ENCODE measurements at regions of chr1 and their contacts with region 1.

Region 1: DNA sequence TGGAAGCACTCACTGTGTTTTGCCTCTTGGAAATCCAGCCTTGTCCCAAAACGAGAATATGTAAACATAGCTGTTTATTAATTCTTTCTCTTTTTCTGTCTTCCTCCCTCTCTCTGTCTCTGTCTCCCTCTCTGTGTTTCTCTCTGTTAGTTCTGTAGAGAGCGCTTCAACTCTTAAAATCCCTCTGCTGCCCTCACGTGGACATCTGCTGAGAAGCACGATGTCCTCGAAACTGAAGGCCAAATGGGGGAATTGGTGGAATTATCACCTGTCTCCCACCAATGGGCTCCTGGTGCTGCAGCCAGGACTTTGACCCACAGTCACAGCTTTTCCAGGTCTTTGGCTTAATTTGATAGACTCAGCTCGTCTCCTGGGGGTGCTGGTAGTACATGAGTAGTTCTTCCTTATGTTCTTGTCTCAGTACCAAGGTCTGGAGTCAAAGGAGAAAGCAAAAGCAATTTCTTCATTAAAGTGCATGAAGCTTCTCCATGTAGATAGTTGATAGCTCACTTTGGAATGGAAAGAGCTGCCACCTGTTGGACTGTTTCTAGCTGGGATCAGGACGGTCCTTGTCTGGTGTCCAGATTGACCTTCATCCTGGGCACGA is 5.5 kb upstream of the GBP6 start:
- DNase-seq: peak; percentile 27
- ATAC-seq: peak; percentile 94
- H3K4me3 ChIP-seq: no peak overlapping the region
- H3K27ac ChIP-seq: no peak overlapping the region
- H3K4me1 ChIP-seq: peaks cover 5% of the 10 kb centered on the region
- H3K27me3 ChIP-seq: no peaks in the 10 kb centered on the region
- CTCF ChIP-seq: peak; percentile 69 to 84 (median 77); a peak in 5 of 6 replicates
- EP300 ChIP-seq: no peak
- POLR2A ChIP-seq: no peak
- RAD21 ChIP-seq: peak; percentile 97

Region 2: DNA sequence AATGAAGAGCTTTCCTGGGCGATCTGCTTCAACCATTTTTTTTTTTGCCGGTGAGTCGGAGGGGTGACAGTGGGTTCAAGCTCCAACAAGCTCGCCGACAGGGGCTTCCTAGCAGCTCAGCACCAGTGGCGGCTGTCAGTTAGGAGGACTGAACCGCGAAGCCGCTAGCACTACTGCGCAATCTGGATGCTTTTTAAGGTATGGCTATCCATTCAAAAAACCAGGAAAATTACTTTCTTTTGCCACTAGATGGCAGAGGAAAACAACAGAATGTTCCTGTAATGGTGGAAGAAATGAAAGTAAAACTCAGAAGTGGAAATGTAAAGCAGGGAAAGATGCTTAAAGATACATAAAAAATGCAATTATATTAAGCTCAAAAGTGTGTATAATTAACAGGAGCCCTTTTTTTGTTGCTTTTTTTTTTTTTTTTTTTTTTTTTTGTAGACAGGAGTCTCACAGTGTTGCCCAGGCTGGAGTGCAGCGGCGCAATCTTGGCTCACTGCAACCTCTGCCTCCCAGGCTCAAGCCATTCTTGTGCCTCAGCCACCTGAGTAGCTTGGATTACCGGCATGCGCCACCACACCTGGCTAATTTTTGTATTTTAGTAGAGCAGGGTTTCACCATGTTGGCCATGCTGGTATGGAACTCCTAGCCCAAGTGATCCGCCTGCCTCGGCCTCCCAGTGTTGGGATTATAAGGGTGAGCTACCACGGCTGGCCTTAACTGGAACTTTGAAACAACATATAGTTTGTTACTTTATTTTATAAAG is 374.4 kb before region 1 on chr1:
- CTCF ChIA-PET with region 1: interaction called, 14 read pairs
- POLR2A ChIA-PET with region 1: interaction called, 11 read pairs
- RAD21 ChIA-PET with region 1: interaction called, 3 read pairs
- SMC1A ChIA-PET with region 1: interaction called, 12 read pairs
- in situ Hi-C with region 1: no loop called
- intact Hi-C with region 1: no loop called
- DNase-seq: no peak
- ATAC-seq: peak; percentile 54
- H3K4me3 ChIP-seq: no peak overlapping the region
- H3K27ac ChIP-seq: peak overlapping the region; percentile 27; the same call in 1 of the 2 replicates
- H3K4me1 ChIP-seq: peaks cover 7% of the 10 kb centered on the region
- H3K27me3 ChIP-seq: no peaks in the 10 kb centered on the region
- CTCF ChIP-seq: peak; percentile 44 to 55 (median 45); a peak in 5 of 6 replicates
- EP300 ChIP-seq: no peak
- POLR2A ChIP-seq: no peak
- RAD21 ChIP-seq: peak; percentile 43

Region 3: DNA sequence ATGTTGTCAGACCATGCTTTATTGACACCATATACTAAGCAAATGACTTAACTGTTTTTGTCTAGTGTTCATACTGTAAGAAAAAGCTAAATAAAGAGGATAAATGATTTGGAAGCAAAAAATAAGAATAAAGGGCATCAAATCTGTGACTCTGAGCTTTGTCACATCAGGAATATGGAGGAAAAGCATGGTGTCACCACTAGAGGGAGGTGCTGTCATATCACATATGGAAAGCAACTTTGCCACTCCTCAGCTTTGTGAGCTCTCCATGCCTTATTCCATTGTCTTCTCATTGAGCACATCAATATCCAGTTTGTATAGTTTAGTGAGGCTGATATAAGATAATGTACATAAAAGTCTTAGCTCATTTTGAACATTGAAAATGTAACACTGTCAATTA is 272.6 kb before region 1 on chr1:
- CTCF ChIA-PET with region 1: interaction called, 26 read pairs
- POLR2A ChIA-PET with region 1: no interaction called
- RAD21 ChIA-PET with region 1: interaction called, 21 read pairs
- SMC1A ChIA-PET with region 1: interaction called, 24 read pairs
- in situ Hi-C with region 1: no loop called
- intact Hi-C with region 1: loop called (anchors 1 kb)
- DNase-seq: no peak
- ATAC-seq: peak; percentile 71
- H3K4me3 ChIP-seq: no peak overlapping the region
- H3K27ac ChIP-seq: no peak overlapping the region
- H3K4me1 ChIP-seq: no peaks in the 10 kb centered on the region
- H3K27me3 ChIP-seq: no peaks in the 10 kb centered on the region; a peak in 1 of 4 replicates
- CTCF ChIP-seq: peak; percentile 56 to 72 (median 61); a peak in 5 of 6 replicates
- EP300 ChIP-seq: no peak
- POLR2A ChIP-seq: no peak
- RAD21 ChIP-seq: peak; percentile 79

Region 4: DNA sequence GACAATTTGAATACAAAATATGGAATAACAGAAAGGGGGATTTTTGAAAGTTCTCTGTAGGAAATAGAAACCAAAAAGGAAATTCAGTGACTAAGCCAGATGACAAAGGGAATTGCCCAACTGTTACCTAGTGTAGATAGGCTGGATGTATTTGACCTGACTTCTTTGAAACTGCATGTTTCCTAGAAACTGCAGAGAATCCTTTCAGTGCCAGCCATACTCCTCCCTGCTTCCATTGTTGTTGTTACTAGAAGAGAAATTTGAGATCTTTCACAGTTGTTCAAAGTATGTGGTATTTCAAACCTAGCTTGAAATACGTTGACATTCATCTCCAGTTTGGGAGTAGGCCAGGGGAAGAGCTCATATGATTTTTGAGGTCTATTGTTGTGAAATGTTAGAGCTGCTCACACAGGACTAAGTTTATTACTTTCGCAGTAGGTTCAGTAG is 84.0 kb before region 1 on chr1:
- CTCF ChIA-PET with region 1: interaction called, 5 read pairs
- POLR2A ChIA-PET with region 1: no interaction called
- RAD21 ChIA-PET with region 1: interaction called, 3 read pairs
- SMC1A ChIA-PET with region 1: interaction called, 8 read pairs
- in situ Hi-C with region 1: no loop called
- intact Hi-C with region 1: loop called (anchors 5 kb)
- DNase-seq: no peak
- ATAC-seq: 0 out of 3 replicates have a peak, but pooled peaks have one; percentile 26
- H3K4me3 ChIP-seq: no peak overlapping the region
- H3K27ac ChIP-seq: no peak overlapping the region
- H3K4me1 ChIP-seq: no peaks in the 10 kb centered on the region
- H3K27me3 ChIP-seq: no peaks in the 10 kb centered on the region
- CTCF ChIP-seq: no peak
- EP300 ChIP-seq: no peak
- POLR2A ChIP-seq: no peak
- RAD21 ChIP-seq: no peak

Region 5: GRCh38 chr1:89310505-89310904 is 47.9 kb before region 1 on chr1:
- CTCF ChIA-PET with region 1: interaction called, 3 read pairs
- POLR2A ChIA-PET with region 1: no interaction called
- RAD21 ChIA-PET with region 1: no interaction called
- SMC1A ChIA-PET with region 1: interaction called, 6 read pairs
- in situ Hi-C with region 1: no loop called
- intact Hi-C with region 1: loop called (anchors 5 kb)
- DNase-seq: peak; percentile 15
- ATAC-seq: peak; percentile 85
- H3K4me3 ChIP-seq: no peak overlapping the region
- H3K27ac ChIP-seq: 0 out of 2 replicates have a peak overlapping the region, but pooled peaks have one; percentile 4
- H3K4me1 ChIP-seq: peaks cover 12% of the 10 kb centered on the region; the same call in 1 of the 2 replicates
- H3K27me3 ChIP-seq: no peaks in the 10 kb centered on the region
- CTCF ChIP-seq: no peak
- EP300 ChIP-seq: no peak
- POLR2A ChIP-seq: no peak
- RAD21 ChIP-seq: no peak

Region 6: GRCh38 chr1:89391686-89392085 is 33.3 kb after region 1 on chr1:
- CTCF ChIA-PET with region 1: no interaction called
- POLR2A ChIA-PET with region 1: no interaction called
- RAD21 ChIA-PET with region 1: no interaction called
- SMC1A ChIA-PET with region 1: no interaction called
- in situ Hi-C with region 1: no loop called
- intact Hi-C with region 1: no loop called
- DNase-seq: no peak
- ATAC-seq: no peak
- H3K4me3 ChIP-seq: no peak overlapping the region
- H3K27ac ChIP-seq: no peak overlapping the region
- H3K4me1 ChIP-seq: no peaks in the 10 kb centered on the region
- H3K27me3 ChIP-seq: no peaks in the 10 kb centered on the region
- CTCF ChIP-seq: no peak
- EP300 ChIP-seq: no peak
- POLR2A ChIP-seq: no peak
- RAD21 ChIP-seq: no peak